ENCODE measurements at regions of chr6 and their contacts with region 1.

Region 1: GRCh38 chr6:4957521-4958231 is 46.2 kb downstream of the RPP40 start:
- DNase-seq: peak; percentile 24
- ATAC-seq: peak; percentile 92
- H3K4me3 ChIP-seq: no peak overlapping the region
- H3K27ac ChIP-seq: no peak overlapping the region
- H3K4me1 ChIP-seq: no peaks in the 10 kb centered on the region
- H3K27me3 ChIP-seq: peaks cover 0 to 6% of the 10 kb centered on the region in 2 experiments; a peak in 2 of 5 replicates
- CTCF ChIP-seq: peak; percentile 63; the same call in 1 of the 2 replicates
- EP300 ChIP-seq: no peak
- POLR2A ChIP-seq: no peak
- RAD21 ChIP-seq: 0 out of 2 replicates have a peak, but pooled peaks have one; percentile 14

Region 2: DNA sequence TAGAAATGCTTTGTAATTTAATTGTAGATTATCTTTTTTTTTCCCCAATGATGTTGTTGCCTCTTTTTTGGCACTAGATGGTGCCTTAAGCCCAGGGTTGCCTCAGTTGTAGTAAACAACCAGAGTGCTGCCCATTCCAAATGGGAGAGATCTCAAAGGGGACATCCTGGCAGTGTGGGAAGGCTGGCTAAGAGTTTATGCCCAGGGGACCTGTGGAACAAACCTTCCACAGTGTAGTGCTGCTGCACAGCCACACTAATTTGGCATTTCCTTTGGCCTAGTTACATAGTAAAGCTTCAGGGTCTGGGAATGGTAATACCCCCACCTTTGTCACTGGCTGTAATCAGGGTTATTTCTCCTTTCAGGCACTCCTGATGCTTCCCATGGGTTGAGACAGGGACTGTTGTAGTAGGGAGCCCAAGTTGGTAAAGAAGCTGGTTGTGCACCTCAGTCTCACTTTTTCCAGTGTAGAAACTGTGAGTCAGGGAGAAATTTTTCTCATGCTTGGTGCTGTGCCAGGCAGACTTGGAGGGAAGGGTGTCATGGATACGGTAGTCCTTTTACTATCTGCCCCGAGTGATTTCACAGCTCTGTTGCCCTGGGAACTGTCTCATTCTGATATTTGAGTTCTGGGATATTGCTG is 644.5 kb before region 1 on chr6:
- CTCF ChIA-PET with region 1: no interaction called
- POLR2A ChIA-PET with region 1: no interaction called
- in situ Hi-C with region 1: no loop called
- intact Hi-C with region 1: loop called (anchors 5 kb)
- DNase-seq: no peak
- ATAC-seq: no peak
- H3K4me3 ChIP-seq: no peak overlapping the region
- H3K27ac ChIP-seq: no peak overlapping the region
- H3K4me1 ChIP-seq: no peaks in the 10 kb centered on the region
- H3K27me3 ChIP-seq: peaks cover 0 to 12% of the 10 kb centered on the region in 2 experiments; a peak in 2 of 5 replicates
- CTCF ChIP-seq: peak; percentile 39
- EP300 ChIP-seq: no peak
- POLR2A ChIP-seq: no peak
- RAD21 ChIP-seq: no peak

Measured in HepG2 (cell line).